ENCODE measurements at regions of chr3 and their contacts with region 1.

Region 1: GRCh38 chr3:73314151-73314951 is 252.9 kb downstream of the EBLN2 start:
- DNase-seq: no peak
- ATAC-seq: no peak
- H3K4me3 ChIP-seq: no peak overlapping the region
- H3K27ac ChIP-seq: no peak overlapping the region
- H3K4me1 ChIP-seq: no peaks in the 10 kb centered on the region
- H3K27me3 ChIP-seq: no peaks in the 10 kb centered on the region
- CTCF ChIP-seq: no peak

Region 2: GRCh38 chr3:73270839-73271483 is 43.4 kb before region 1 on chr3:
- CTCF ChIA-PET with region 1: no interaction called
- POLR2A ChIA-PET with region 1: interaction called, 11 read pairs
- in situ Hi-C with region 1: no loop called
- intact Hi-C with region 1: no loop called
- DNase-seq: no peak
- ATAC-seq: no peak
- H3K4me3 ChIP-seq: no peak overlapping the region
- H3K27ac ChIP-seq: no peak overlapping the region
- H3K4me1 ChIP-seq: no peaks in the 10 kb centered on the region
- H3K27me3 ChIP-seq: no peaks in the 10 kb centered on the region
- CTCF ChIP-seq: no peak

Measured in Panc1 (cell line).